Activated T-helper 1 cell treated with anti-CD3 and anti-CD28 coated beads, Interleukin-12 subunit alpha, Interleukin-12 subunit beta, Interleukin-2, Interleukin-4 antibody, amounts not matched to agents 30 ng/mL and 10 ng/mL and 1 ng/mL, durations not matched to agents 14 hours and 24 hours and 36 hours (primary cell): ENCODE measurements at regions of chrX and their contacts with region 1.

Region 1: DNA sequence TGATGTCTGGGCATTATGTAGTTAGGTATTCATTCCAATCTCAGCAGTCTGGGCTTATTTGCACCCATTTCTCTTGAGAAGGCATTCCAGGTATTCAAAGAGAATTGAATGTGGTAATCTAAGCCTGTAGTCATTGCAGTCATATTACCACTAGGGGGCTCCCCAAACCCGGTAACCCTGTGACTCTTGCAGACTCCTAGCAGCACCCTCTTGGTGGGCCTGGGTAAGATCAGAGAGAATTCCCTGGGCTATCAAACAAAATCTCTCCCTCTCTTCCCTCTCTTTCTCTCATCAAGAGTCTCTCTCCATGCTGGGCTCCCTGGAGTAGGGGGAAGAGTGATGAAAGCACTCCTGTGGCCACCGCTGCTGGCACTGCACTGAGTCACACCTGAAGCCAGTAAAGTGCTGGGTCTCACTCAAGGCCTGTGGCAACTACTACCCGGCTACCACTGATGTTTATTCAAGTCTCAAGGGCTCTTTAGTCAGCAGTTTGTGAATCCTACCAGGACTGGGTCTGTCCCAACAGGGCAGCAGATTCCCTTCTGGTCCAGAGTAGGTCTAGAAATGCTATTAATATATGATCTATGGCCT is 187.7 kb upstream of the NUDT10 start:
- DNase-seq: peak; percentile 0
- H3K4me3 Mint-ChIP-seq: no peak overlapping the region
- H3K27ac Mint-ChIP-seq: no peak overlapping the region
- H3K4me1 Mint-ChIP-seq: no peaks in the 10 kb centered on the region
- H3K27me3 Mint-ChIP-seq: peaks cover 7% of the 10 kb centered on the region

Region 2: DNA sequence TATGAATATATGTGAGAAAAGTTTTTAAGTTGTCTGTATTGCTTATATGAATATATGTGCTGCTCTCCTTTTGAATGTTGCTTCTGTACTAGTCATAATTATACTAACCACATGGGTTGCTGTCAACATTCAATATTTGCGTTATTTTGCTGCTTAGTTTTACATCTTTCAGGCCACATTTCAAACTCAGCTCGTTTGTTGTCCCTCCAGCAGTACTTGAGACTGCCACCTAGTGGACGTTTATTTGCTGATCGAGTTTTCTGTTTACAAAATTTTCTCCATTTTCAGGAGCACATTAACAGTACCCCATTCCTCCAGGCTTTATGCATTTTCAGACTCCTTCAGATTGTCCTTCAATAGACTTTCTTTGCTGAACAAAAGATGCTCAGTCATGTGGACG is 275.7 kb after region 1 on chrX:
- intact Hi-C with region 1: loop called (anchors 5 kb)
- DNase-seq: peak; percentile 5
- H3K4me3 Mint-ChIP-seq: no peak overlapping the region
- H3K27ac Mint-ChIP-seq: no peak overlapping the region
- H3K4me1 Mint-ChIP-seq: no peaks in the 10 kb centered on the region
- H3K27me3 Mint-ChIP-seq: no peaks in the 10 kb centered on the region

Region 3: DNA sequence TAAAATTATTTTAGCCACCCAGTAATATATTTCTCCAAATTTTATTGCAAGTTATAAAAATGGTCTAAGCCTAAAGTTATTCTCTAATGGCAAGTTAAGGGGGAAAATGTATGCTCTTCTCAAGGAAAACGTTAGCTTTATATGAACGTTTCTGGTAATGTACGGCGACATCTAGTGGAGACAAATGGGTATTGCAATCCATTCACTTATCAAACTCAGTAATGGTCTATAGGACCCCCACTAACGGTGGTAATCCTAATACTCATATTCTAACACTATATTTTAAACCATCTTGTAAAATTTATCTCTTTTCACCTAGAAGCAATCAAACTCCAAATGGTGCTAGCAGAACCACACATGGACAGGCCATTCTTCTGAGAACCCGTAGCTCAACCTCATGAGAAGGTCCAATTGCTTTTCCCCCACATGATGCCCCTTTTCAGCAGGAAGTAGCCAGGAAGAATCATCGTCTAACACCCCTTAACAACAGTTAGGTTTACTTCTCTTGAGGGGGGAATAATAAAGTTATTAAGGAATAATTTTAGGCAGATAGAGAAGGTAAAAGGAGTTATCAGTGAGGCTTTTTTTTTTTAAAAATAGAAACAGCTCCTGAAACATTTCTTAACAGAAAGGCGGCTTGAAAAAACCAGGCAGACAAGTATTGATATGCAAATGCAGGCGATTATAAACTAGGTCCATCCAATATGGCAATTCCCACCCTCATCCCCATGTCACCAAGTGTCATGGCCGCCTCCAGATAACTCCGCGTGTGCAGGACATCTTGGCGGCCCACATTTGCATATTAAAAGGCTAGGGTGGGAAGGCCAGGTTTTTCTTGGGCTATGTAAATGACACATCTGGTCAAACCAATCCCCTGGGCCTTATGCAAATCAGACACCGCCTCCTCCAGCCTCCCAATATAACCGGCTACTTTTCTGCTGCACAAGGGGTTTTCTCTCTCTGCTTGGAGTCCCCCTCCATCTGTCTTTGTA is 316.4 kb after region 1 on chrX:
- intact Hi-C with region 1: loop called (anchors 2 kb)
- DNase-seq: no peak
- H3K4me3 Mint-ChIP-seq: no peak overlapping the region
- H3K27ac Mint-ChIP-seq: no peak overlapping the region
- H3K4me1 Mint-ChIP-seq: no peaks in the 10 kb centered on the region
- H3K27me3 Mint-ChIP-seq: no peaks in the 10 kb centered on the region